CD4-positive, alpha-beta memory T cell (primary cell): ENCODE measurements at regions of chr22 and their contacts with region 1.

Region 1: GRCh38 chr22:46737976-46738646 is at the start of gene CERK:
- DNase-seq: peak; percentile 60 to 79 (median 64)
- H3K4me3 ChIP-seq: peak within 1 kb of the TSS; percentile 55 to 64
- H3K4me3 Mint-ChIP-seq: peak within 1 kb of the TSS; percentile 97 to 100 (median 100)
- H3K27ac ChIP-seq: peak within 1 kb of the TSS; percentile 67
- H3K27ac Mint-ChIP-seq: peak within 1 kb of the TSS; percentile 98 to 100 (median 100)
- H3K4me1 ChIP-seq: peaks cover 47% of the 10 kb centered on the region
- H3K4me1 Mint-ChIP-seq: peaks cover 24 to 56% (median 37%) of the 10 kb centered on the region in 4 donors
- H3K27me3 ChIP-seq: no peaks in the 10 kb centered on the region
- H3K27me3 Mint-ChIP-seq: no peaks in the 10 kb centered on the region
- total RNA-seq, gene CERK: 161 to 164 TPM

Region 2: DNA sequence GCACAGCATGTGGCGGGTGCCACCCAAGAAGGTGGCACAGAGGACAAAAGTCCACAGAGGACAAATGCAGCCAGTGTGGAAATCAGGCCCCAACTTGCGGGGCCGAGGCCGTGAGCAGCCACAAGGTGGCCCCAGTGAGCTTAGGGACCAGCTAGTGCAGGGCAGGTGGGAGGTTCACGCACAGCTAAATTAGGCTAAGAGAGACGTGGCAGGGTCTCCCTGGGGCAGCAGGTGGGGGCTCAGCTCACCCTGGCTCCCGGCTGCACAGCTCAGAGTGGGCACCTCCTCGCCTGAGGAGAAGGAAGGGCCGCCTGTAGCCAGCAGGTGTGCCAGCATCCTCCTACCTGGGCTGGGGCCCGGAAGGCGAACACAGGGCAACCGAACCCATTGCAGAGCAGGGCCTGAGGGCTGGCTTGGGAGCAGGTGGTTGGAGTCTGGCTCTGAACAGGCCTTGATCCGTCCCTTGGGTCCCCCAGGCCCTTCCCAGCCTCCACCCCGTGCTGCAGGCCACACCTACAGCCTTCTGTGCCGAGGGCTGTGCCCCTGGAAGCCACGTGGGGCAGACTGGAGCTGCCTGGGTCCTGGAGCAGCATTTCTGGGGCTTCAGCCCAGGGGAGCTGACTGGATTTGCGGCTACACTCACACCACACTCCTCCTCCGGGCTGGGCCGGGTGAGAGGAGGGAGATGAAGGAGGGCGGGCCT is 174.6 kb before region 1 on chr22:
- CTCF ChIA-PET with region 1: interaction called, 6 read pairs
- POLR2A ChIA-PET with region 1: interaction called, 5 read pairs
- intact Hi-C with region 1: loop called (anchors 2 kb)
- DNase-seq: peak; percentile 71 to 77 (median 72)
- H3K4me3 ChIP-seq: no peak overlapping the region
- H3K4me3 Mint-ChIP-seq: peak overlapping the region in 6 of 8 donors; percentile 20 to 71 (median 54)
- H3K27ac ChIP-seq: no peak overlapping the region
- H3K27ac Mint-ChIP-seq: peak overlapping the region in 2 of 7 donors; percentile 29 to 32
- H3K4me1 ChIP-seq: peaks cover 6% of the 10 kb centered on the region
- H3K4me1 Mint-ChIP-seq: peaks cover 2 to 5% (median 4%) of the 10 kb centered on the region in 4 donors
- H3K27me3 ChIP-seq: no peaks in the 10 kb centered on the region
- H3K27me3 Mint-ChIP-seq: no peaks in the 10 kb centered on the region

Region 3: GRCh38 chr22:46674367-46674781 is 63.7 kb before region 1 on chr22:
- CTCF ChIA-PET with region 1: no interaction called
- POLR2A ChIA-PET with region 1: interaction called, 4 read pairs
- intact Hi-C with region 1: loop called (anchors 5 kb)
- DNase-seq: peak; percentile 82 to 98 (median 83)
- H3K4me3 ChIP-seq: peak overlapping the region; percentile 61 to 73
- H3K4me3 Mint-ChIP-seq: peak overlapping the region; percentile 90 to 99 (median 94)
- H3K27ac ChIP-seq: peak overlapping the region; percentile 75
- H3K27ac Mint-ChIP-seq: peak overlapping the region; percentile 93 to 99 (median 98)
- H3K4me1 ChIP-seq: peaks cover 27% of the 10 kb centered on the region
- H3K4me1 Mint-ChIP-seq: peaks cover 8 to 44% (median 19%) of the 10 kb centered on the region in 4 donors
- H3K27me3 ChIP-seq: no peaks in the 10 kb centered on the region
- H3K27me3 Mint-ChIP-seq: no peaks in the 10 kb centered on the region

Region 4: DNA sequence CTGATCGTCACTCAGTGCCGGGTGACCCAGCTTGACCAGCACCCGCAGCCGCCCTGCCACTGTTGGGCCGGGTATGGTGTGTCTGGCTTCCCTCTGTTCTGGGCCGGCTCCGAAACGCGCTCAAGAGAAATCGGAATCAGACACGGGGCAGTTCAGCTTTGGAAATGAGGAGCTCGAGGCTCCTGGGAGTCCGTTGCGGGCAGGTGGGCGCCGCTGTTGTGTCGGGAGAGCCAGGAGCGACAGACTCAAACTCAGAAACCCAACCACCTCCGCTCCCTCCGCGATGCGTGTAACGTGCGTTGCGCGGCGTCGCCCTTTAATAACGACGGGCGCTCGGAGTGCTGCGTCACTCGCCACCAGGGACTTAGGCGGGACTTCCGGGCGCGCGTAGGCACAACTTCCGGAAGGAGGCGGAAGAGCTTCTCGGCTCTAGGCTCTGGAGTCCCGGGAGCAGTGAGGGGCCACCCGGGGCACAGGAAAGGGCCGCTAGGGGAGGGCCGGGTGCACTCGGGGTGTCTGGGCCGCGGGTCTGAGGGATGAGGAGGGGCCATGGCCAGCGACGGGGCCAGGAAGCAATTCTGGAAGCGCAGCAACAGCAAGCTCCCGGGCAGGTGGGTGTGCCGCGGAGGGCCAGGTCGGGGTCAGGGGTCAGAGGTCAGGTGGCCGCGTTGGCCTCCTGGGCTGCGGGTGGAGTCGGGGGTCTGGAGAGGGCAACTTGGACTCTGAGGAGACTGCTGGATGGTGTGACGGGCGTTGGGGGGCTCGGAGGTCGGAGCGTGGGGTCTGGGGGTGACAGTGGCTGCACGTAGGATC is 24.3 kb after region 1 on chr22 and contains the start of gene TBC1D22A:
- CTCF ChIA-PET with region 1: interaction called, 69 read pairs
- POLR2A ChIA-PET with region 1: interaction called, 56 read pairs
- intact Hi-C with region 1: loop called (anchors 1 kb)
- DNase-seq: peak; percentile 91 to 94 (median 93)
- H3K4me3 ChIP-seq: peak within 1 kb of the TSS; percentile 94 to 96
- H3K4me3 Mint-ChIP-seq: peak within 1 kb of the TSS; percentile 98 to 100 (median 99)
- H3K27ac ChIP-seq: peak within 1 kb of the TSS; percentile 99
- H3K27ac Mint-ChIP-seq: peak within 1 kb of the TSS; percentile 99 to 100 (median 100)
- H3K4me1 ChIP-seq: peaks cover 51% of the 10 kb centered on the region
- H3K4me1 Mint-ChIP-seq: peaks cover 38 to 76% (median 53%) of the 10 kb centered on the region in 4 donors
- H3K27me3 ChIP-seq: no peaks in the 10 kb centered on the region
- H3K27me3 Mint-ChIP-seq: no peaks in the 10 kb centered on the region
- total RNA-seq, gene TBC1D22A: 49.0 to 49.2 TPM

Region 5: GRCh38 chr22:46791201-46791731 is 53.2 kb after region 1 on chr22:
- CTCF ChIA-PET with region 1: interaction called, 5 read pairs
- POLR2A ChIA-PET with region 1: interaction called, 22 read pairs
- intact Hi-C with region 1: loop called (anchors 1 kb)
- DNase-seq: peak; percentile 83 to 96 (median 87)
- H3K4me3 ChIP-seq: peak overlapping the region in 1 of 2 donors; percentile 45
- H3K4me3 Mint-ChIP-seq: peak overlapping the region; percentile 80 to 91 (median 86)
- H3K27ac ChIP-seq: peak overlapping the region; percentile 87
- H3K27ac Mint-ChIP-seq: peak overlapping the region; percentile 99 to 100 (median 100)
- H3K4me1 ChIP-seq: peaks cover 56% of the 10 kb centered on the region
- H3K4me1 Mint-ChIP-seq: peaks cover 33 to 61% (median 43%) of the 10 kb centered on the region in 4 donors
- H3K27me3 ChIP-seq: no peaks in the 10 kb centered on the region
- H3K27me3 Mint-ChIP-seq: no peaks in the 10 kb centered on the region

Region 6: GRCh38 chr22:47090591-47091245 is 352.6 kb after region 1 on chr22:
- CTCF ChIA-PET with region 1: no interaction called
- POLR2A ChIA-PET with region 1: no interaction called
- intact Hi-C with region 1: no loop called
- DNase-seq: peak; percentile 11 to 93 (median 36)
- H3K4me3 ChIP-seq: no peak overlapping the region
- H3K4me3 Mint-ChIP-seq: peak overlapping the region; percentile 77 to 89 (median 80)
- H3K27ac ChIP-seq: no peak overlapping the region
- H3K27ac Mint-ChIP-seq: peak overlapping the region; percentile 56 to 97 (median 92)
- H3K4me1 ChIP-seq: peaks cover 24% of the 10 kb centered on the region
- H3K4me1 Mint-ChIP-seq: peaks cover 30 to 63% (median 47%) of the 10 kb centered on the region in 4 donors
- H3K27me3 ChIP-seq: no peaks in the 10 kb centered on the region
- H3K27me3 Mint-ChIP-seq: no peaks in the 10 kb centered on the region